ENCODE measurements at regions of chr19 and their contacts with region 1.

Region 1: GRCh38 chr19:58408152-58409009 is at the start of gene ZNF584:
- DNase-seq: peak; percentile 97
- ATAC-seq: peak; percentile 97
- H3K4me3 Mint-ChIP-seq: peak within 1 kb of the TSS; percentile 84
- H3K27ac Mint-ChIP-seq: peak within 1 kb of the TSS; percentile 92
- H3K4me1 Mint-ChIP-seq: peaks cover 29% of the 10 kb centered on the region
- H3K27me3 Mint-ChIP-seq: no peaks in the 10 kb centered on the region
- total RNA-seq, gene ZNF584: 9.9 to 11.2 TPM

Region 2: DNA sequence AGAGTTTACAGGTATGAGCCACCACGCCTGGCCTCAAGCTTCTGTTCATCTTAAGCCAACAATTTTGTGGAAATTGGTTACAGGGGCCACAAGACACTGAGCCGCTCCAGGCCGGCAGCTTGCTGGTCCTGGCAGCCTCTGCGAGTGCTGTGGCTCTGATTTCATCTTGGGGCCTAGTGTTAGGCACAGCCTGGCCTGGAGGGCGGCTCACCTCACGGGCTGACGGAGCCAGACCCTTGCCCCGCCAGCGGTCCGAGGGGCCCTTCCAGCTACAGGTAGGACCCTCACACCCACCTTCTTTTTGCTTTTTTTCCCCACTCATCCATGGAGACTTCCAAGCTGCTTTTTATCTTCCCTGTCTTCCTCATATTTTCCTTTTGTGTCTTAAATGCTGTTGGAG is 171.1 kb before region 1 on chr19:
- CTCF ChIA-PET with region 1: no interaction called
- POLR2A ChIA-PET with region 1: no interaction called
- intact Hi-C with region 1: no loop called
- DNase-seq: no peak
- ATAC-seq: no peak
- H3K4me3 Mint-ChIP-seq: no peak overlapping the region
- H3K27ac Mint-ChIP-seq: no peak overlapping the region
- H3K4me1 Mint-ChIP-seq: peaks cover 1% of the 10 kb centered on the region
- H3K27me3 Mint-ChIP-seq: no peaks in the 10 kb centered on the region

Region 3: DNA sequence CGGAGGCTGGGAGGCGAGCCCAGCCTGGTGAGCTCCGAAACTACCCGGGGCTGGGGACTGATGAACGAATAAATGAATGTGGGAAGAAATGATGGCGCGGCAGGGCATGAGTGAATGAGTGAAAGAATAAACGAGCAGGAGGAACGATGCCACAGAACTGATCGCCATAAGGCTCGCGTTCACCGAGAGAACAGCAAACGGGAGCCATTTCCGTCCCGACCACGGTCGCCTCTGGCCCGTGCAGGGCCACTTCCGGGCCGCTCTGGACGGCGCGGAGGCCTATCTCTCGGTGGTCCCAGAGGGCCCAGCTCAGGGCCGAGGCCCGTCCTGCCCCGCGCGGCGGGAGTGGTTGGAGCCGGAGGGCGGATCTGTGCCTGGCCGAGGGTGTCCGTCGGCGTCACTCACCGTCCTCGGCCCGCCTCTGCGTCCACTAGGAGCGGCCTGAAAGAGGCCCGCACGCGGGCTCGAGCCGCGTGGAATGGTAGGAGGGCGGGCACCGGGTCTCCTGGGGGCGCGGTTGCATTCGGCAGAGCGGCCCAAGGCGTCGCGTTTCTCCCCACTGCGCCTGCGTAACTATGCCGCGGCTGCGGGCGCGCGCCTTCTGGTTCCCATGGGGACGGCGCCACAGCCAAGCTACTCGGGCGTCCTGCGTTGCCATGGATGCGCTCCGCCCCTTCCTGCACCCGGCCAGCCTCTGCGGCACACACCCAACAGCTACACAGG is 45.9 kb before region 1 on chr19 and contains the start of gene ZNF497:
- CTCF ChIA-PET with region 1: interaction called, 4 read pairs
- POLR2A ChIA-PET with region 1: interaction called, 3 read pairs
- intact Hi-C with region 1: loop called in 1 of 2 experiments (anchors 1 kb)
- DNase-seq: peak; percentile 99
- ATAC-seq: peak; percentile 94
- H3K4me3 Mint-ChIP-seq: peak within 1 kb of the TSS; percentile 86
- H3K27ac Mint-ChIP-seq: peak within 1 kb of the TSS; percentile 93
- H3K4me1 Mint-ChIP-seq: peaks cover 7% of the 10 kb centered on the region
- H3K27me3 Mint-ChIP-seq: no peaks in the 10 kb centered on the region
- total RNA-seq, gene ZNF497: 1.1 to 1.5 TPM

Region 4: DNA sequence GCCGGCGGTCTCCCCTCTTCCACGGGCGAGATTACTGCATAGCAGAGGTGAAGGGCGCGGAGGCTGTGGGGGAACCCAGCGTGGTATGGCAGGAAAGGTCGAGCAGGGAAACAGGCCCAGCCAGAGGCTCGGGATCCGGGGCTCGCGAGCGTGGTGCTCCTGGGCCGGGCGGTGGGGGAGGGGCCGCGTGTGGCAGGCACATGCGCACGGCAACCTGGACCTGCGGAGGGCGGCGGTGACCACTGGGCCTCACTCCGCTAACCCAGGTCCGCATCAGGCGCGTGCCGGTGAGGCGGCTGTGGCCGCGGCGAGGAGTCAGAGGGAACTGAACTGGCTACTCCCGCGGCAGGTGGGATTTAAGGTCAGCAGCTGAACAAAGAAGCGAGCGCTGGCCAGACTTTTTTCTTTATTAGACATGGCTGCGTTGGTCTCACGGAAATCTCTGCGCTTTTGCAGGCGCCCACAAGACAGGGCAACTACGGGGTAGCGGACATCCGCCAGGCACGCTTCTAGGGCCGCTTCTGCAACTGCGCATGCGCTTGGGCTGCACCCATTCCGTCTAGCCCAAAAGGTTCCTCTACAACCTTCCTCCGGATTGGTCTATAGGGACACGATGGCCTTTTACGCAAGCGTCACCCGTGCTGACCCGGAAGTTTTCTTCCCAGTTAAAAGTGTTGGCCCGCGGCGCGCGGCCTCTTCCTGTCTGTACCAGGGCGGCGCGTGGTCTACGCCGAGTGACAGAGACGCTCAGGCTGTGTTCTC is 21.6 kb before region 1 on chr19 and contains the start of gene RPS5:
- CTCF ChIA-PET with region 1: no interaction called
- POLR2A ChIA-PET with region 1: interaction called, 5 read pairs
- intact Hi-C with region 1: loop called (anchors 1 to 2 kb)
- DNase-seq: peak; percentile 97
- ATAC-seq: peak; percentile 96
- H3K4me3 Mint-ChIP-seq: peak within 1 kb of the TSS; percentile 96
- H3K27ac Mint-ChIP-seq: peak within 1 kb of the TSS; percentile 97
- H3K4me1 Mint-ChIP-seq: peaks cover 33% of the 10 kb centered on the region
- H3K27me3 Mint-ChIP-seq: no peaks in the 10 kb centered on the region
- total RNA-seq, gene RPS5: 1,234 to 1,535 TPM

Region 5: GRCh38 chr19:58451358-58452101 is 43.1 kb after region 1 on chr19 and contains the start of gene ZNF324B:
- CTCF ChIA-PET with region 1: no interaction called
- POLR2A ChIA-PET with region 1: no interaction called
- intact Hi-C with region 1: loop called in 1 of 2 experiments (anchors 1 kb)
- DNase-seq: peak; percentile 98
- ATAC-seq: peak; percentile 99
- H3K4me3 Mint-ChIP-seq: peak within 1 kb of the TSS; percentile 77
- H3K27ac Mint-ChIP-seq: peak within 1 kb of the TSS; percentile 55
- H3K4me1 Mint-ChIP-seq: peaks cover 25% of the 10 kb centered on the region
- H3K27me3 Mint-ChIP-seq: peaks cover 15% of the 10 kb centered on the region
- total RNA-seq, gene ZNF324B: 5.8 to 7.5 TPM

Region 6: DNA sequence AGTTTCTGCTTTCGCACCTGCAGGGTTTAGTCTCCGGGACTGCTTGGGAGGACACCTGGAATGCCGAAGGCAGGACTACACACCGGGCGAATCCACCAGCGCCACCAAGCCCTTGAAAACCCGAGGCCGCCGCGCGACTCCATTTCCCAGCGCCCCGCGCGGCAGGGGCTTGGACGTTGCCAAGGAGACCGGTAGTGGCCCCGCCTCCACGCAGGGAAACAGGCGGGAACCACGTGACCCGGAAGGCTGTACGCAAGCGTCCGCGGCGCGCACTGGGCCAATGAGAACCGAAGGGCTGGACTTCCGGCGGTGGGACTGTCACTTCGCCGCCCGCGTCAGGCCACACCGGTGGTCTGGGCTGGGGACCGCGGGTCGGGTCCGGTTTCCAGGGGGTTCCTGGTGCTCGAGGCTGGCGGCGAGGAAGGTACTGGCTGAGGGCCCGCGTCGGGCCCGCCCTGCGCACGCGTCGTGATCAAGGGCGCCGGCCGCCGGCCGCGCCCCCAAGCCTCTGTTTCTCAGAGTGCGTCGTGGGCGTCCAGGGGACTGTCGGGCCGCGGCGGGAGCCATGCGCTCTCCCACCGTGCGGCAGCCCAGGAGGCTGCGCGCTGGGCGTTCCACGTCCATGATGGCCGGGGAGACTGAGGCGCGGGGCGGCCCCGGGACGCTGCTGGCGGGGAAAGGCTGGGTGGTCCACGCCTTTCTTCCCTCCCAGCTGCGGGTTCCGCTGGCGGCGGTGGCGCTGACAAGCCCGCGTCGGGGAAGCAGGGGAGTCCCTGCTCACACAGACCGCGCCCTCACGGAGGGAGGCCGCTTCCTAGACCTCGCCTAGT is 58.6 kb after region 1 on chr19 and contains the start of gene ZNF324:
- CTCF ChIA-PET with region 1: no interaction called
- POLR2A ChIA-PET with region 1: interaction called, 4 read pairs
- intact Hi-C with region 1: loop called (anchors 1 to 2 kb)
- DNase-seq: peak; percentile 99
- ATAC-seq: peak; percentile 98
- H3K4me3 Mint-ChIP-seq: peak within 1 kb of the TSS; percentile 86
- H3K27ac Mint-ChIP-seq: peak within 1 kb of the TSS; percentile 47
- H3K4me1 Mint-ChIP-seq: peaks cover 22% of the 10 kb centered on the region
- H3K27me3 Mint-ChIP-seq: peaks cover 2% of the 10 kb centered on the region
- total RNA-seq, gene ZNF324: 4.7 to 7.5 TPM

Region 7: DNA sequence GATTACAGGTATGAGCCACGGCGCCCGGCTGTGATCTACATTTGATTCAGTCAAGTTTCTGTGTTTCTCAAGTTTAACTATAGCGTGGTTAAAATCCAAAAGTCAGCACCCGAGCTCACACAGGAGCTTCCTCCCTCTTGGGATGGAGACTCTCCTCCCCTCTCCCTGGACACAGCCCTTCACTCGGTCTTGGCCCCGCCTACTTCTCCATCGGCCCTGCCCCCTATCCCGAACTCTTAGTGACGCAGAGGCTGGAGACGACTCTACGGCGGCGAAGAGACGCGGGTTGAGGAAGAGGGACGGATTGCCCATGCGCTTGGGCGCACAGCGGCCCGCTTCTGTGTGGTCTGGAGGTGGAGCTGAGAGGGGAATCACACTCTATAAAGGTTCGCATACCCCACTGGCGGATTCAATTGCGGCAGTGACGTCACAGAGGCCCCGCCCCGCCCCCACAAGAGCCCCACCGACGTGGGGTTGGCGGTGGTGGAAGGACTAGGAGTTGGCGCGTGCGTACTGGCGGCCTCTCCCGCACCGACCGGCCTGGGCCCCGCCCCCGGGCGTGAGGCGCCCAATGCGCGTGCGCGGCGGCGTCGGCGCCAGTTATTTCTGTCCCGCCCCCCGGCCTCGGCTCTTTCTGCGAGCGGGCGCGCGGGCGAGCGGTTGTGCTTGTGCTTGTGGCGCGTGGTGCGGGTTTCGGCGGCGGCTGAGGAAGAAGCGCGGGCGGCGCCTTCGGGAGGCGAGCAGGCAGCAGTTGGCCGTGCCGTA is 135.6 kb after region 1 on chr19 and contains the start of gene TRIM28:
- CTCF ChIA-PET with region 1: no interaction called
- POLR2A ChIA-PET with region 1: no interaction called
- intact Hi-C with region 1: loop called in 1 of 2 experiments (anchors 1 kb)
- DNase-seq: peak; percentile 100
- ATAC-seq: peak; percentile 98
- H3K4me3 Mint-ChIP-seq: peak within 1 kb of the TSS; percentile 96
- H3K27ac Mint-ChIP-seq: peak within 1 kb of the TSS; percentile 97
- H3K4me1 Mint-ChIP-seq: peaks cover 34% of the 10 kb centered on the region
- H3K27me3 Mint-ChIP-seq: peaks cover 4% of the 10 kb centered on the region
- total RNA-seq, gene TRIM28: 481 to 758 TPM

Region 8: GRCh38 chr19:58572818-58573657 is 164.7 kb after region 1 on chr19 and contains the start of gene MZF1:
- CTCF ChIA-PET with region 1: no interaction called
- POLR2A ChIA-PET with region 1: no interaction called
- intact Hi-C with region 1: loop called in 1 of 2 experiments (anchors 1 kb)
- DNase-seq: peak; percentile 100
- ATAC-seq: peak; percentile 69
- H3K4me3 Mint-ChIP-seq: peak within 1 kb of the TSS; percentile 95
- H3K27ac Mint-ChIP-seq: peak within 1 kb of the TSS; percentile 100
- H3K4me1 Mint-ChIP-seq: peaks cover 38% of the 10 kb centered on the region
- H3K27me3 Mint-ChIP-seq: no peaks in the 10 kb centered on the region
- total RNA-seq, gene MZF1: 14.3 to 15.0 TPM

Measured in activated CD4-positive, alpha-beta T cell treated with anti-CD3 and anti-CD28 coated beads for 36 hours (primary cell).